Dorsolateral prefrontal cortex (tissue), 120 donors: ENCODE measurements at regions of chr6 and their contacts with region 1.

Region 1: DNA sequence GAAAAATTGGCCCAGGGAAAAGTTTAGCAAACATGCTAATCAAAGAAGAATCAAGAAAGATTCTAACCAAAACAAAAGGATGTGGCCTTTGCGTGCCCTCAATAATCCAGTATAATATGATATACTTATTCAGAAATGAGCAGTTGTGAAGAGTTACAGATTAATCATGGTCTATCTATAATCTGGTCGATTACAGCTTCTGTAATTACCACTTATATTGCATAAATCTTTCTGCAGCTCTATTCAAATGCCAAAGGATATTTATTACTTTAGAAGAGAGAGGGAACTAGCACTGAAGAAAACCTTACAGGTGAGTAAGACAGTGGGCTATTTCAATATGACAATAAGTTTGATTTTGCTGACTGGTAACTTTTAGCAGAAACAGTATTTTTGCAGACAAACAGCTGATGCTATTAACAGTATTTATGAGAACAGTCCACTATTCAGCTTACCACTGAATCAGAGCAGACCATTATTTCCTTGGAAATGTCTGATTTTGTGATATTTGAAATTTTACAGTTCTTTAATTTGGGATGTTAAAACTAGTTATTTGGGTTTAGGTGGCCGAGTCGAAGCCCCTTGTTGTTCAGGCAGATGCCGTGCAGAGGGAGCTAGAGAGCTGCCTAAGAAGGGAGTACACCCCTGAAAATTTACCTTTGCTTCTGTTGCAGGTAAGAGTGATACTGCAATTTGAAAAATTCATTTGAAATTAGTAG is 92.2 kb downstream of the CEP57L1 start:
- DNase-seq: peak in 9 of 10 donors; percentile 34 to 63 (median 55)
- H3K4me3 ChIP-seq: peak overlapping the region in 25 of 59 donors; percentile 2 to 42 (median 15)
- H3K27ac ChIP-seq: peak overlapping the region in 9 of 59 donors; percentile 5 to 46 (median 33)
- H3K27me3 ChIP-seq: peaks cover 0 to 18% (median 0%) of the 10 kb centered on the region in 45 donors
- CTCF ChIP-seq: peak; percentile 69 to 98 (median 94)

Region 2: GRCh38 chr6:109095027-109095834 is 92.3 kb before region 1 on chr6 and contains the start of gene CEP57L1:
- intact Hi-C with region 1: loop called (anchors 5 to 10 kb)
- DNase-seq: peak; percentile 92 to 98 (median 96)
- H3K4me3 ChIP-seq: peak within 1 kb of the TSS; percentile 58 to 99 (median 86)
- H3K27ac ChIP-seq: peak within 1 kb of the TSS; percentile 89 to 100 (median 98)
- H3K27me3 ChIP-seq: no peaks in the 10 kb centered on the region
- CTCF ChIP-seq: peak in 20 of 56 donors; percentile 4 to 46 (median 18)
- total RNA-seq, gene CEP57L1: 14.7 to 38.7 (median 24.8) TPM

Region 3: DNA sequence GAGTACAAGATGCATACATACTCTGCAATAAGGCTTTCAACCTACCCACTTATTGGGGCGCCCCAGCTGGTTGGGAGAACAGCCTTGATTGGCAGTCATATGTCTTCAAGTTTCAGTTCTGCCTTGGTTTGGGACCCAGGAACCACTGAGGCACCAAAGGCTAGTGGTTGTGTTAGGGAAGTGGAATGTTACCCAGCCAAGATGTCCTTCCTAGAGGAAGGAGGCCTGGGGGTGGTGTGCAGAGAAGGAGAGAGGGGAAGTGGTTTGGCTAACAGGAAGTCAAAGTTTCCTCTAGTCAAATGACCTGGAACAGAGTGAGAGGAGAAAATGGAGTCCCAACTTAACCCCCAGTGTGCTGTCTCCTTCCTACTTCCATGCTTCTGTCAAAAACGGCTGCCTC is 135.3 kb after region 1 on chr6:
- intact Hi-C with region 1: loop called (anchors 5 to 10 kb)
- DNase-seq: no peak
- H3K4me3 ChIP-seq: no peak overlapping the region
- H3K27ac ChIP-seq: peak overlapping the region in 1 of 59 donors; percentile 1
- H3K27me3 ChIP-seq: no peaks in the 10 kb centered on the region
- CTCF ChIP-seq: no peak